ENCODE measurements at regions of chr16 and their contacts with region 1.

Region 1: GRCh38 chr16:68328151-68328859 is 17.5 kb downstream of the PRMT7 start:
- DNase-seq: peak; percentile 84
- ATAC-seq: peak; percentile 100
- H3K4me3 Mint-ChIP-seq: no peak overlapping the region
- H3K27ac Mint-ChIP-seq: peak overlapping the region; percentile 80
- H3K4me1 Mint-ChIP-seq: no peaks in the 10 kb centered on the region; the same call in 1 of the 2 replicates
- H3K27me3 Mint-ChIP-seq: no peaks in the 10 kb centered on the region
- CTCF ChIP-seq: peak; percentile 76

Region 2: DNA sequence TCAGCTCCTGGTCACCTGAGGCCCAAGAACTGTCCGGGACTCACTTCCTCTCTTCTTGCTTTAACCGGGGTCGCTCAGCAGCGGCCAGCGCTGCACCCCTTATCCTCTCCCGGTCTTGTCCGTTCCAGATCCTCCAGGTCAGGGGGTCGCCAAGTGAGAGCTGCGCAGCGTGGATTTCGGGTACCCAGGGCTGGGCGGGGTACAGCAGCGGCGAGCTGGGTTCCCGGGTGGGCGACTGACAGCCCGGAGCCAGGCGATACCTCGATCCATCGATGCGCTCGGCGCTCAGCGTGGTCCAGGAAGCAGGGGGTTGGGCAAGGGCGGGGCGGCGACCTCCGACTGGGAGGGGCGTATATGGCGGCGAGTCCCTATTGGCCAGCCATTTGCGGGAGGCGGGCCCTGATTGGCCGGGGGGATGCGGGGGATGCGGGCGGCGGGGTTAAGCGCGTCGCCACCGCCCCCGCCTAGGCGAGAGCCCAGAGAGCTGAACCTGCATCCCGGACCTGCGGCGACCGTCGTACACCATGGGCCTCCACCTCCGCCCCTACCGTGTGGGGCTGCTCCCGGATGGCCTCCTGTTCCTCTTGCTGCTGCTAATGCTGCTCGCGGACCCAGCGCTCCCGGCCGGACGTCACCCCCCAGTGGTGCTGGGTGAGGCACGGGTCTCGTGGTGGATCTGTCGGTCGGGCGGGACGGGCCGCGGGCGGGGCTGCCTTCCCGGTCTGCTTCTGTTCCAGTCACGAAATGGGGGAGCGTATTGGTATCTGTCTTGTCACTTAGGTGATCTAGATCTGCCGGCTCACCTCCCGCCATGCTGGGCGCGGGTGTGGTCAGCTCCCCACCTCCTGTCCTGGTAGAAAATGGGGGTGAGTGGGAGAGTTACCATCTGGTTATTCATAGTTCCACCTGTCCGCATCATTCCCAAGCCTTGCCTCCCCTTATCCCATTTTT is 83.1 kb before region 1 on chr16 and contains the start of gene PLA2G15:
- CTCF ChIA-PET with region 1: interaction called, 12 read pairs
- POLR2A ChIA-PET with region 1: no interaction called
- DNase-seq: peak; percentile 98
- ATAC-seq: peak; percentile 96
- H3K4me3 Mint-ChIP-seq: peak within 1 kb of the TSS; percentile 97
- H3K27ac Mint-ChIP-seq: peak within 1 kb of the TSS; percentile 56; the same call in 1 of the 2 replicates
- H3K4me1 Mint-ChIP-seq: peaks cover 5% of the 10 kb centered on the region
- H3K27me3 Mint-ChIP-seq: peaks cover 37% of the 10 kb centered on the region
- CTCF ChIP-seq: no peak
- total RNA-seq, gene PLA2G15: 9.4 to 10.2 TPM (median 9.8 TPM) in 3 replicates

Region 3: GRCh38 chr16:68342620-68343019 is 14.3 kb after region 1 on chr16:
- CTCF ChIA-PET with region 1: no interaction called
- POLR2A ChIA-PET with region 1: no interaction called
- DNase-seq: no peak
- ATAC-seq: peak; percentile 50; the same call in 1 of the 2 replicates
- H3K4me3 Mint-ChIP-seq: no peak overlapping the region
- H3K27ac Mint-ChIP-seq: peak overlapping the region; percentile 83
- H3K4me1 Mint-ChIP-seq: 0 out of 2 replicates have a peak, but pooled peaks cover 3% of the 10 kb centered on the region
- H3K27me3 Mint-ChIP-seq: no peaks in the 10 kb centered on the region; the same call in 1 of the 2 replicates
- CTCF ChIP-seq: no peak

Region 4: DNA sequence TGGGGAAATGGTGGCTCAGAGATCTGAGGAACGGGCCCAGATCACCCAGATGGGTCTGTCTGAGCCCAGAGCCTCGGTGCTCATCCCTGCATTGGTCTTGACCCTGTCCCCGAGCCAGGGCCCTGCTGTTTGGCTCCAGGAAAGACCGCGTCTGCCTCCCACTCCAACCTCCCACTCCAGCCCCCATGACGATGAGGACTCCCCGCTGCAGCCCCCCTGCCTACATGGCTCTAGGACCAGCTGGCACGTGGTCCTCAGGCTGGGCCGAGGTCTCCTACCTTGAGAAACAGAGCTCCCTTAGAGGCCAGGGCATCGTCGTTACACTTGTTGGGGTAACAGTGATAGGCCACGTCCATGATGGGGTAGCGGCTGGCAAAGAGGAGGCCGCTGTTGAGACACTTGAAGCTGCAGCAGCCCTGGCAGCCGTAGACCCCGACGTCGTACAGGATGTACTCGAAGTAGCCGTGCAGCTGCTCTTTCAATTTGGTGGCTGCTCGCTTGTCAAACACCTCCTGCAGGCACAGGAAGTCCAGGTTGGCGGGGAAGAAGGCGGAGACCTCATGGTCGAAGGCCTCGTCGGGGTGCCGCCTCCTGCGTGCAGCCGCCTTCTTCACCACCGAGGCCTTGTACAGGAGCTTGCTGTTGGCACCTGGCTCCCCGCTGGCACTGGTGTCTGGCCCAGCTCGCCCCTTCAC is 42.4 kb after region 1 on chr16:
- CTCF ChIA-PET with region 1: no interaction called
- POLR2A ChIA-PET with region 1: no interaction called
- DNase-seq: no peak
- ATAC-seq: no peak
- H3K4me3 Mint-ChIP-seq: no peak overlapping the region
- H3K27ac Mint-ChIP-seq: no peak overlapping the region
- H3K4me1 Mint-ChIP-seq: peaks cover 18% of the 10 kb centered on the region
- H3K27me3 Mint-ChIP-seq: peaks cover 2% of the 10 kb centered on the region; the same call in 1 of the 2 replicates
- CTCF ChIP-seq: no peak